Heart right ventricle (tissue), 16 donors: ENCODE measurements at regions of chr1 and their contacts with region 1.

Region 1: DNA sequence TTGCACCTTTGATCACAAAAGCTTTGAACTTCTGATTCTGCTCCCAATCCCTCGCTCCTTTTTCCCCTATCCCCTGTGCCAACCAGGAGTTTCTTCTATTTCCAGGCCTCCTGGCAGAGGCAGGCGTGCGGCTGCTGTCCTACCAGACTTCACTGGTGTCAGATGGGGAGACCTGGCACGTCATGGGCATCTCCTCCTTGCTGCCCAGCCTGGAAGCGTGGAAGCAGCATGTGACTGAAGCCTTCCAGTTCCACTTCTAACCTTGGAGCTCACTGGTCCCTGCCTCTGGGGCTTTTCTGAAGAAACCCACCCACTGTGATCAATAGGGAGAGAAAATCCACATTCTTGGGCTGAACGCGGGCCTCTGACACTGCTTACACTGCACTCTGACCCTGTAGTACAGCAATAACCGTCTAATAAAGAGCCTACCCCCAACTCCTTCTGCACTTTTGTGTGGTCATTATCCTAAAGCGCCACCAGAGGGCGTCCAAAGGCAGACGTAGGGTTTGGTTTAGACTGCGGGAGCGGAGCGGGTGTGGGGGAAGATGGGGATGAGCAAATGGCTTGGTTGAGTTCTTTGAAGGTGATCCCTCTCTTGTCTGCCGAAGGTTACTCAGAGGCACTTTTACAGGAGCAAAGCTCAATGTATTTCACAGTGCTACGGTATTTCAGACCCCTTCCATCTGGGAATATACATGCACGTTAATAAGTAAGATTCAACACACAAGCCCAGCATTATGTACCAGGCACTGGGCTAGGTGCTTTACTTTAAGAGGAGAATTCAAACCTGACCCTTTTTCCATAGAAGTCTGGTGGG is 24.7 kb downstream of the HMGCS2 start:
- DNase-seq: peak; percentile 44 to 50
- ATAC-seq: peak in 7 of 8 donors; percentile 53 to 70 (median 63)
- H3K4me3 ChIP-seq: no peak overlapping the region
- H3K27ac ChIP-seq: peak overlapping the region in 4 of 10 donors; percentile 1 to 33 (median 28)
- H3K4me1 ChIP-seq: peaks cover 0 to 46% (median 9%) of the 10 kb centered on the region in 9 donors
- H3K27me3 ChIP-seq: no peaks in the 10 kb centered on the region
- CTCF ChIP-seq: peak; percentile 55 to 86 (median 79)

Region 2: GRCh38 chr1:119771016-119771415 is 27.0 kb after region 1 on chr1:
- intact Hi-C with region 1: no loop called
- DNase-seq: peak in 1 of 2 donors; percentile 30
- ATAC-seq: no peak
- H3K4me3 ChIP-seq: no peak overlapping the region
- H3K27ac ChIP-seq: no peak overlapping the region
- H3K4me1 ChIP-seq: peaks cover 0 to 23% (median 13%) of the 10 kb centered on the region in 9 donors
- H3K27me3 ChIP-seq: no peaks in the 10 kb centered on the region
- CTCF ChIP-seq: no peak

Region 3: DNA sequence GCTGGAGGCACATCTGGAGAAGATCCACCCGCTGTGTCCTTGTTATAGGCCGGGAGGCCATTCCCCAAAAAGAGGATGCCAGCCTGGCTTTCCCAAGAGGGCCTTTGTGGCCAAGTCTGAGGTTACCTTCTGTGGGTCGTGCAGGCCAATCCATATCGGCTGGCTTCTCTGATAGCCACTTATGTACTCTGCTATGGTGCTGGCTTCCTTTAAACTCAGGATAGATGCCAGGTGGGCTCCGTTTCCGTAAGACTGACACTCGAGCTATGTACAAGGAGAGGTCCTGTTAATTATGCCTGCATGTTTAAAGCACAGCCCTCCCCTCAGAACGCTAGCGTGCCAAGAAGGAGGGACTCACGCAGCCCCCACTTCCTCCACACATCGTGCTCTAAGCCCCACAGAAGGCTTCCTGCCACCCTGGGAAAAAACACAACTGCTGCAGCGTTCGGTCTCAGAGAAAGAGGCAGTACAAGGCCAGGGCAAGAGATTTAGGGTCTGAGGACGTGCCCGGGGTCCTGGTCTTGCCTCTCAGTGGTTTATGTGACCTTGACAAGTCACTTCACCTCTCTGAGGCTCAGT is 55.7 kb after region 1 on chr1:
- intact Hi-C with region 1: loop called in 1 of 10 experiments (anchors 5 kb)
- DNase-seq: no peak
- ATAC-seq: no peak
- H3K4me3 ChIP-seq: no peak overlapping the region
- H3K27ac ChIP-seq: no peak overlapping the region
- H3K4me1 ChIP-seq: peaks cover 0 to 2% (median 0%) of the 10 kb centered on the region in 9 donors
- H3K27me3 ChIP-seq: peaks cover 0 to 3% (median 0%) of the 10 kb centered on the region in 7 donors
- CTCF ChIP-seq: no peak

Region 4: DNA sequence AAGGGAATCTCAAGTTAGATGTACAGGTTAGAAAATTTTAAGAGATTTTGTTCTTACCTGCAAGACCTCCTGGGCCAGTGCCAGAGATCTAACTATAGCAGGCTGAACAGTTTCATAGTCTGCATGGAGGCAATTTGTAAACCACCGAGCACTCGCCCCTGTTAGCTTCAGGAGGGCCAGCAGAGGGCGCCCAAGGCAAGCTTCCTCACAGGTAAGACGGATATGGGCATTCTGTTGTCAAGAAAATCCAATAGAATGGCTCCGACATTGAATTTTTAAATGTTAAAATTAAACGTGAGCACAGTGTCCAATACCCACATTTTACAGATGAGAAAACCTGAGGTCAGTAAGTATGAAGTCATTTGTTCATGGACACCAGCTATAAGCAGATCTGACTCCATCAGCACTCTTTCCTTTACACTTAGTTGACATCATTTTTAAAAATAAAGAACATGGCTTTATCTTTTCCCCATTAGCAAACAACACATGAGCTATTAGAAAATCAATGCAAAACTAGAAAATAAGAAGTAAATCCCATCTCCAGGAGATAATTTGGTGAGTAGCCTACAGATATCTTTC is 65.1 kb after region 1 on chr1:
- intact Hi-C with region 1: loop called in 3 of 10 experiments (anchors 2 to 5 kb)
- DNase-seq: peak; percentile 45 to 70
- ATAC-seq: peak in 6 of 8 donors; percentile 66 to 82 (median 73)
- H3K4me3 ChIP-seq: no peak overlapping the region
- H3K27ac ChIP-seq: no peak overlapping the region
- H3K4me1 ChIP-seq: no peaks in the 10 kb centered on the region
- H3K27me3 ChIP-seq: peaks cover 0 to 25% (median 18%) of the 10 kb centered on the region in 7 donors
- CTCF ChIP-seq: peak; percentile 63 to 94 (median 86)

Region 5: GRCh38 chr1:119885903-119886783 is 142.2 kb after region 1 on chr1:
- intact Hi-C with region 1: loop called in 1 of 10 experiments (anchors 10 kb)
- DNase-seq: peak; percentile 41 to 42
- ATAC-seq: peak in 5 of 8 donors; percentile 46 to 73 (median 66)
- H3K4me3 ChIP-seq: no peak overlapping the region
- H3K27ac ChIP-seq: no peak overlapping the region
- H3K4me1 ChIP-seq: peaks cover 0 to 4% (median 0%) of the 10 kb centered on the region in 9 donors
- H3K27me3 ChIP-seq: peaks cover 0 to 23% (median 8%) of the 10 kb centered on the region in 7 donors
- CTCF ChIP-seq: peak; percentile 41 to 80 (median 68)

Region 6: DNA sequence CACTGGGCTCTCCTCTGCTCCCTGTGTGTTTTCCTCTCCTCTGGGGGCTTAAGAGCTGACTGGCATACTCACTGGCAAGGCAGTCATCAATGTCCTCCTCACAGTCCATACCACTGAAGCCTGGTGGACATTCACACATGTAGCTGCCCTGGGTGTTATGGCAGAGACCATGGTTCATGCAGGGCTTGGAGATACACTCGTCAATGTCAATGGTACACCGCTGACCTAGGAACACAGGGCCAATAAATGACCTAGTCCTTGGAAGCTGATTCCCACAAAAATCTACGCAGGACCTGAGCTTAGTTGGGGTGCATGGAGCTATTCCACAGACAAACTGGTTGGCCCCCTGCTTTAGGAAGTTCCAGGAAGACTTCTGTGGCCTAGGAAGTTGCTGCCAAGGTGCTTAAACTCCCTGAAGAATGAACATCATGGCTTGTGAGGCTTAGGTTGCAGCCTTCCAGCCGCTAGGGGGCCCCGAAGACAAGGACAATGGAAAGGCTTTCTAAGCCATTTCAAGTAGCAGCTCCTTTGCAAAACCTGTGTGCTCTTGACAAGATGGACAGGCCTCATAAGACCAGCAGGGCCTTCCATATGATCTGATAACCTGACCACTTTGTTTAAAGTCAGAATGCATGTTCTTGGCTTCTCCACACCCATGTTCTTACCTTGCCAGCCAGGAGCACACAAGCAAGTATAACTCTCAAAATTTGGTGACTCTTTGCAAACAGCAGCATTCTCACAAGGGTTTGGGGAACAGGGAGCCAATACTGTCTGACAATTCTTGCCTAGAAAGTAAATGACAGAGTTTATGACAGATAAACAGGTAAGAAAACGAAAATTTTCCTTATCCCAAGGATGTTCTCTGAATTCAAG is 204.6 kb after region 1 on chr1:
- intact Hi-C with region 1: loop called in 1 of 10 experiments (anchors 10 kb)
- DNase-seq: peak; percentile 76 to 79
- ATAC-seq: peak; percentile 78 to 90 (median 86)
- H3K4me3 ChIP-seq: no peak overlapping the region
- H3K27ac ChIP-seq: peak overlapping the region in 1 of 10 donors; percentile 18
- H3K4me1 ChIP-seq: peaks cover 0 to 18% (median 3%) of the 10 kb centered on the region in 9 donors
- H3K27me3 ChIP-seq: no peaks in the 10 kb centered on the region
- CTCF ChIP-seq: peak; percentile 51 to 86 (median 81)